Activated CD4-positive, alpha-beta memory T cell treated with anti-CD3 and anti-CD28 coated beads, Interleukin-2, amount 10 ng/mL, durations not matched to agents 7 days and 5 days (primary cell): ENCODE measurements at regions of chr1 and their contacts with region 1.

Region 1: DNA sequence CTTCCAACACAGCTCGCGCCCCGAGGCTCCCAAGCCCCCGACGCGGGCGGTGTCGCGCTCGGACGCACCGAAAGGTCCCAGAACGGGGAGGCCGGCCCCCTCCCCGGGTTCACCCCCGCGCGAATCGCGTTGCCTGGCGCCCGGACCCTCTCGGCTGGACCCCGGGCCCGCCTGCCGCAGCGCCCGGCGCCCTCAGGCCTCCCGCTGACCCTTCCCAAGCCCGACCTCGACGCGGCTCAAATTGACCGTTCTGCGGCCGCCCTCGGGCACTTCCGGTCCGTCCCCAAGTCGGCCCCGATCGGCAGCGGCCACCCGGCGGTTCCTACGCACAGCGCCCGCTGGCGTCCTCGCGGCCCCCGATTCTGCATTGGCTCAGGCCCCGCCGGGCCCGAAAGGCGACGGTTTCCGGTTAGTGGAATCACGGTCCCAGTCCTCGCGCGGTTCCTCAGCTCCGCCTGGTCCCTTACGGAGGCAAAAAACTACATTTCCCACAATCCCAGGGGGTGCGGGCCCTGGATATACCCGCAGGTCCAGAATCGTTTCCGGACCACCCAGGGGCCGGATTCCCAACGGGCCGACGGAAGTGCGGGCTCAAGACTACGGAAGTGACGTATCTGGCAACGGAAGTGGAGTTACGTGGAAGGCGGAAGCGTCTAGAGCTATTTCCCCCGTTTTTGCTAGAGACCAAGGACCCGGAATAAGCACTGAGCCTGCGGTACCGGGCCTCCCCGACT is at the start of gene AURKAIP1:
- DNase-seq: peak; percentile 98
- H3K4me3 Mint-ChIP-seq: peak within 1 kb of the TSS; percentile 90
- H3K27ac Mint-ChIP-seq: peak within 1 kb of the TSS; percentile 95
- H3K4me1 Mint-ChIP-seq: peaks cover 49% of the 10 kb centered on the region
- H3K27me3 Mint-ChIP-seq: no peaks in the 10 kb centered on the region
- total RNA-seq, gene AURKAIP1: 121 to 122 TPM

Region 2: DNA sequence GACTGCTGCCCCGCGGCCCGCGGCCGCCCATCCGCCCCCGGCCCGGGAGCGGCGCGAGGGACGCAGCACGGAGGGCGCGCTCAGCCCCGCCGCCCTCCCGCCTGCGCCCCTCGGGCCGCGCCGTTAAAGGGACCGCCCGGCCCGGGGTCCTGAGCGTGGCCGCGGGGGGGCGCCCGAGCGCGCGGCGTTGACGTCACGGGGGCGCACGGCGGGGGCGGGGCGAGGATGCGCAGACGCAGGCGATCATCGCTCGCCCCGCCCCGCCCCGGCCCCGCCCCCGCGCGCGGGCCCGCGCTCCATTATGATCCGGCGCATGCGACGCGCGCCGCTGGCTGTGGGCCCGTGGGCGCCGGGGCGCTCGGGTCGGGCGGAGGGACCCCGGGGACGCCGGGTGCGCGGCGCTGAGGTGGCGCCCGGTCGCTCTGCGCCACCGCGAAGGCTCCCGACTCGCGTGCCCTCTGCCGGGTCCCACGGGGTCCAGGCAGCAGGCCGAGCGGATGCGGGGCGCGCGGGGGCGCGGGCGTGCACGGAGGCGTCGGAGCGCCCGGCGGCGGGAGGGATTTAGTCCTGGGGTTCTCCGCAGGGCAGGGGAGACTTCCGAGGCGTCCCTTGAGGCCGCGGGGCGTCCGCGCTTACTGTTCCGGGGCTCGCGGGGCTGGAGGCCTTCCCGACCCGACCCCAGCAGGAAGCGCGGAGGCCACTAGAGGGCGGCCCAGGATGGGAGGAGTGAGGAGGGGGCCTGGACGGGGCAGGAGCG is 25.7 kb before region 1 on chr1 and contains the start of gene DVL1:
- CTCF ChIA-PET with region 1: interaction called, 28 read pairs
- POLR2A ChIA-PET with region 1: interaction called, 14 read pairs
- DNase-seq: peak; percentile 68
- H3K4me3 Mint-ChIP-seq: peak within 1 kb of the TSS; percentile 71
- H3K27ac Mint-ChIP-seq: no peak within 1 kb of the TSS
- H3K4me1 Mint-ChIP-seq: peaks cover 36% of the 10 kb centered on the region
- H3K27me3 Mint-ChIP-seq: peaks cover 23% of the 10 kb centered on the region
- total RNA-seq, gene DVL1: 36.0 to 37.8 TPM

Region 3: GRCh38 chr1:1387098-1388077 is 12.3 kb after region 1 on chr1:
- CTCF ChIA-PET with region 1: interaction called, 7 read pairs
- POLR2A ChIA-PET with region 1: interaction called, 11 read pairs
- DNase-seq: no peak
- H3K4me3 Mint-ChIP-seq: no peak overlapping the region
- H3K27ac Mint-ChIP-seq: no peak overlapping the region
- H3K4me1 Mint-ChIP-seq: peaks cover 1% of the 10 kb centered on the region
- H3K27me3 Mint-ChIP-seq: no peaks in the 10 kb centered on the region

Region 4: DNA sequence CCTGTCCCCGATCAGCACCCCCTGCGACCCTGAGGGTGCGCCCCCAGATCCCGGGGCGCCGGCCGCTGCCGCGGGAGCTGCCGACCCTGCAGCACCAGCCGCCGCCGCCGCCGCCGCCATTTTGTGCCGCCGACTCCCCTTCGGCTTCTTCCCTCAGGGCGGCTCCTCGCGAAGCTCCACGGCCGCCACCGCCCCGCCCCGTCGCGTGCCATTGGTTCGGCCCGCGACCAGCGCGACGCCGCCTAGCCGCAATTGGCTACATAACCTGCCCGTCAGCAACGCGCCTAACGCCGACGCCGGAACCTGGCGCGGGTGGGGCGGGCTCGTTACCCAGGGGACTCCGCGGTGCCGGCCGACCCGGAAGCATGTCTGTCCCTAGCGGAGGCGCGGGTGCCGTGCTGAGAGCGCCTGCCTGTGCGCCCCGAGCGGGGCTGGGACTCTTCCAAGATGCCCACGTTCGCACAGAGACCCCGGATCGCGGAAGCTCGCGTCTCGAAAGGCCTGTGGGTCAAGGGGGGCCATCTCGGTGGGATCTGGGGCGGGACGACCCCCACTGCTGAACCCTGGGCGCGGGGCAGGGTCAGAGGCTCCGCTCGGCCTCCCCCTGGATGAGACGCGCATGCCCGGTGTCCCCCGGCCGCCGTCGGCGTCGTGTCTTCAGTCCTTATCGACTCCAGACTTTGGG is 24.2 kb after region 1 on chr1 and contains the start of gene CCNL2:
- CTCF ChIA-PET with region 1: interaction called, 19 read pairs
- POLR2A ChIA-PET with region 1: interaction called, 51 read pairs
- DNase-seq: peak; percentile 100
- H3K4me3 Mint-ChIP-seq: peak within 1 kb of the TSS; percentile 85
- H3K27ac Mint-ChIP-seq: peak within 1 kb of the TSS; percentile 84
- H3K4me1 Mint-ChIP-seq: peaks cover 57% of the 10 kb centered on the region
- H3K27me3 Mint-ChIP-seq: no peaks in the 10 kb centered on the region
- total RNA-seq, gene CCNL2: 104 TPM

Region 5: DNA sequence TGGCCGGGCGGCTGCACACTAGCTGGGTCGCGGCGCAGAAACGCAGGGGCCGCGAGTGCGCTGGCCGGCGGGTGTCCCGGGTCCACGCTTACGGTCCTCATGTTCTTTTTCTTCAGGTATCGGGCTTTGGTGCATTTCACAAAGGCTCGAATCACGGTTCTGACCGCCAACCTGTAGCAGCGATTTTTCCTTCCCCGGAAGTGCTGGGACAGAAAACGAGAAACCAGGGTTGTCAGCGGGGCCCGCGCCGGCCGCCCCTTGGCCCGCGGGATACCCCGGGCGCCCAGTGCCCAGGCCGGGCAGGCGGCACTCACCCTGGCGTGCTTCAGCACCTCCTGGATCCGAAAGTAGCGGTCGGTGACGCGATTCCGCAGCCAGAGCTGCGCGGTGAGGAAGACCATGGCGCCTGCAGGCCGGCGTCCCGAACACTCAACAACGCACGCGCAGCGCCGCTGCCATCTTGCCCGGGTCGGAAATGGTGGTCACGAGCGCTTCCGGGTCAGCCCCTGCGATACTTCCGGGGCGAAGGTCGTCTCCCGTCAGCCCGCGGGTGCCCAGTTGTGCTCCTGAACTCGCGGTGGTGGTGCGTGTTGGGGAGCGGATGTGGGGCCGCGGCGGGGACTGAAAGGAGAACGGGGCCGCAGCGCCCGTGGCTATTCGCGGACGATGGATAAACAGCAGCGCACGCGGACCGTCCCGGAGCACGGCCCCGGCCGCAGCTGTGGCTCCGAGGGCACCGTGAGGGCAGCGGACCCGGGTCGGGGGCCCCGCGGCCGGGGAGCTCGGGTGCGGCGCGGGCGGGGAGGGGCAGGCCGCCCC is 31.9 kb after region 1 on chr1 and contains the start of gene MRPL20:
- CTCF ChIA-PET with region 1: interaction called, 4 read pairs
- POLR2A ChIA-PET with region 1: interaction called, 41 read pairs
- DNase-seq: peak; percentile 97
- H3K4me3 Mint-ChIP-seq: peak within 1 kb of the TSS; percentile 91
- H3K27ac Mint-ChIP-seq: peak within 1 kb of the TSS; percentile 91
- H3K4me1 Mint-ChIP-seq: peaks cover 46% of the 10 kb centered on the region
- H3K27me3 Mint-ChIP-seq: no peaks in the 10 kb centered on the region
- total RNA-seq, gene MRPL20: 82.8 to 87.3 TPM